ENCODE measurements at regions of chr3 and their contacts with region 1.

Region 1: DNA sequence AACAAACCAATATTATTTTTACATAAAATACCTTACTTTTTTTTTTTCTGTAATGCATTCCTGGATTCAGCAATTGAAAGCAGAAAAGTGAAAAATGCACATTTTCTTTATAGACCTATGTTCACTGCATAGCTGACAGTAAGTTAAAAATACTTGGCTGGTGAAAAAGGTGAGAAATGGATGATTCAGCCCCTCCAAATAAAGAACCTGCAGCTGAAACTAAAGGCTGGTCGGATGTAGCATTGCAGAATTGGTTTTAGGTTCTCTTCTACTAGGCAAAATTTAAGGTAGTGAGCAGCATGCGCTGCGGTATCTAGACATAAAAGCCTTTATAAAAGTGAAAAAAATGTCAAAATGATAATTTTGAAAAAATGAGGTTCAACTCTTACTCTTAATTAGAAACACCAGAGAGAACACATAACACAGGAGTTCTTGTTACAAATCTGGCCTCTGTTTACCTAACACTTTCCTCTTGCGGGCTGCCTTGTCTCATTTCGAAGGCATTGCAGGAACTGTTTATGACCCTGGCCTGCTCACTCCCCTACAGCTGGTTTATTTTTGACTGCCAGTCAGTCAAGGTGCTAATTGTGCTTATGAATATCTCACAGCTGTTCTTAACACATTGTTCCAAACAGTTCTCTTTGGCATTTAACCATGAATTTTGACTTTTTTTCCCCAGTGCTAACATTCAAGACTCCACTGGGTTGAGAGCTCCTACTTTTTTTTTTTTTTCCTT is 455.4 kb upstream of the TBL1XR1 start:
- DNase-seq: no peak
- H3K4me3 ChIP-seq: no peak overlapping the region
- H3K27ac ChIP-seq: no peak overlapping the region
- H3K4me1 ChIP-seq: peaks cover 0 to 2% (median 0%) of the 10 kb centered on the region in 4 donors
- H3K27me3 ChIP-seq: no peaks in the 10 kb centered on the region
- CTCF ChIP-seq: no peak
- EP300 ChIP-seq: no peak
- POLR2A ChIP-seq: no peak

Region 2: DNA sequence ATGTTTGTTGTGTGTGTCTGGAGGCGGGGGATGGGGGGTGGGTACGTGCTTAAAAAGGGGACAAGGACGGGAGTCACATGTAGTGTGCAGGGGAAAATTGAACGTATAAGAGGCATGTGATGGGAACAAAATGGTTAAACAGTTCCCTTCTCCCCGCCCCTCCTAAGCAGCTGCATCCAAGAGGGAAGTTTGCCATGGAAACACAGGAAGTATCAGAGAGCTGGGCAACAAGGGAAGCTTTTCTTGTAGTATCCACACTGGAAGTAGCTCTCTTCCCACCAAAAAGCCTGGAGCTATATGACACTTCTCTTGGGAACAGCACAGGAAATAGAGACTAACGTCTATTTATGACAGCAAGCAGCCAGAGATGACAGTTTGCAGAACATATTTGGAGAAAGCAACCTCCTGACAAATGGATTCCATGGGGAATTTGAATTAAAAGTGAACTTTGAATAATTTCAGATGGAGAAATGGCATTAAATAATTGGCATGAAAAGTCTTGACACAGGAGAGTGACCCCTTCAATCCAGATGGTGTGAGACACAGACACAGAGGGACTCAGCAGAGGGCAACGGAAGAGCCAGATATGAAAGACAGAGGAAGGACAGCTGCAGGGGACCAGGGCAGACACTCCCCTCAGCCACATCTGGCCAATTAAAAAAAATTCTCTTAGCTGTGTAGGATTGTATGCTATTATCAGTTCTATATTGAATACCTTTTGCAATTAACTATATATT is 161.3 kb before region 1 on chr3:
- in situ Hi-C with region 1: no loop called
- intact Hi-C with region 1: no loop called
- DNase-seq: no peak
- H3K4me3 ChIP-seq: no peak overlapping the region
- H3K27ac ChIP-seq: peak overlapping the region in 3 of 4 donors; percentile 2 to 25 (median 7)
- H3K4me1 ChIP-seq: peaks cover 0 to 5% (median 2%) of the 10 kb centered on the region in 4 donors
- H3K27me3 ChIP-seq: no peaks in the 10 kb centered on the region
- CTCF ChIP-seq: no peak
- EP300 ChIP-seq: no peak
- POLR2A ChIP-seq: no peak

Region 3: GRCh38 chr3:177816667-177817208 is 164.0 kb after region 1 on chr3:
- in situ Hi-C with region 1: no loop called
- intact Hi-C with region 1: loop called (anchors 10 kb)
- DNase-seq: no peak
- H3K4me3 ChIP-seq: no peak overlapping the region
- H3K27ac ChIP-seq: peak overlapping the region in 2 of 4 donors; percentile 22 to 42
- H3K4me1 ChIP-seq: peaks cover 0 to 14% (median 0%) of the 10 kb centered on the region in 4 donors
- H3K27me3 ChIP-seq: no peaks in the 10 kb centered on the region
- CTCF ChIP-seq: no peak
- EP300 ChIP-seq: no peak
- POLR2A ChIP-seq: no peak

Region 4: DNA sequence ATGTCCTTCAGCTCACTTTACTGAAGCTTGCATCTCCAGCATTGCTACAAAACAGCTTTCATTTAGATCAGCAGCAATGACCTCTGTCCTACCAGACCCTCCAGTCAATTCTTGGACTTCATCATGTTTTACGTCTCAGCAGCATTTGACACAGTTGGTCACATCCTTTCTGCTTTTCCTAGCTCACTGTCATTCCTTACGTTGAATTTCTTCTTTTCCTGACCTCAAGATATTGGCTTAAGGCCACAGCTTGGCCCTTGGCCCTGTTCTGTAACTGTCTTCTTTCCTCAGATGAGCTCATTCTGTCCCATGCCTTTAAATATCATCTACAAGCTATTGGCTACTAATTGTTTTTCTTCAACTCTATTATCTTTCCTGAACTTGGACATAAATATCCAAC is 307.3 kb after region 1 on chr3:
- in situ Hi-C with region 1: no loop called
- intact Hi-C with region 1: no loop called
- DNase-seq: no peak
- H3K4me3 ChIP-seq: no peak overlapping the region
- H3K27ac ChIP-seq: no peak overlapping the region
- H3K4me1 ChIP-seq: no peaks in the 10 kb centered on the region
- H3K27me3 ChIP-seq: no peaks in the 10 kb centered on the region
- CTCF ChIP-seq: no peak
- EP300 ChIP-seq: no peak
- POLR2A ChIP-seq: no peak

Region 5: DNA sequence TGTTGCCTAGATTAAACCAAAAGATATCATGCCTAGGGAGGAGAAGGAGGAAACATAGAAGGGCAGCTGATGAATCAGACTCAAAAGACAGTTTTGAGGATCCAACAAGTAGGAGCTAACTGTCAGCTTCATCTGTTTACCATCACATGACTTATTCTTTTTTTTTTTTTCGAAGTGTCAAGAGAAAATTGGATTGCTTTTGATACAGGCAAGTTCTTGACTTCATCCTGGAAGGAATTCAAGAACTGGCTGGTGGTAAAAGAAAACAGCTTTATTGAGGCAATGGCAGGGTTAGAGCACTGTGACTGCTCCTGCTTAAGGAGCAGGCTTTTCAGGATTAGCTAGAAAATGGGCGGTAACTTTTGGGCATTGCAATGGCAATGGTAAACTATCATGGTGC is 656.0 kb after region 1 on chr3:
- in situ Hi-C with region 1: no loop called
- intact Hi-C with region 1: no loop called
- DNase-seq: no peak
- H3K4me3 ChIP-seq: no peak overlapping the region
- H3K27ac ChIP-seq: no peak overlapping the region
- H3K4me1 ChIP-seq: no peaks in the 10 kb centered on the region
- H3K27me3 ChIP-seq: no peaks in the 10 kb centered on the region
- CTCF ChIP-seq: no peak
- EP300 ChIP-seq: no peak
- POLR2A ChIP-seq: no peak

Region 6: DNA sequence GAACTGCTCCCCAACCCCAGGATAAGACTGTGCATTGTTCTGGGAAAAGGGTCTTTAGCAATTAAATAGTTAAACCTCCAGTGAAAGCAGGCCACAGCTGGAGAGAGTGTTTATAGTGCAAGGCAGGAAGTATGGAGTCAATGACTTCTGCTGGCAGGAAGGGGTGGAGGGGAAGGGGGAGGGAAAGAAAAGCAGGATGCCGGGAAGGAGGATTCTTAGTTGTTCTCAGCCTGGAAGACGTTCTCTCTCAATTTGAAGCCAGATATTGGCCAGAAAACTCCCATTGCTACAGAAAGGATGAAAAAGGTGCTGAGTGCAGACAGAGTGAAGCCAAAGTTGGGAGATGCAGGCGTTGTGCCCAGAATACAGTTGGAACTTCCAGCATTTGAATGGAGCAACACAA is 1874.3 kb after region 1 on chr3:
- in situ Hi-C with region 1: no loop called
- intact Hi-C with region 1: no loop called
- DNase-seq: peak; percentile 11
- H3K4me3 ChIP-seq: no peak overlapping the region
- H3K27ac ChIP-seq: peak overlapping the region; percentile 40 to 70 (median 59)
- H3K4me1 ChIP-seq: peaks cover 0 to 14% (median 0%) of the 10 kb centered on the region in 4 donors
- H3K27me3 ChIP-seq: no peaks in the 10 kb centered on the region
- CTCF ChIP-seq: no peak
- EP300 ChIP-seq: no peak
- POLR2A ChIP-seq: no peak